CD4-positive, alpha-beta memory T cell (primary cell): ENCODE measurements at regions of chr10 and their contacts with region 1.

Region 1: DNA sequence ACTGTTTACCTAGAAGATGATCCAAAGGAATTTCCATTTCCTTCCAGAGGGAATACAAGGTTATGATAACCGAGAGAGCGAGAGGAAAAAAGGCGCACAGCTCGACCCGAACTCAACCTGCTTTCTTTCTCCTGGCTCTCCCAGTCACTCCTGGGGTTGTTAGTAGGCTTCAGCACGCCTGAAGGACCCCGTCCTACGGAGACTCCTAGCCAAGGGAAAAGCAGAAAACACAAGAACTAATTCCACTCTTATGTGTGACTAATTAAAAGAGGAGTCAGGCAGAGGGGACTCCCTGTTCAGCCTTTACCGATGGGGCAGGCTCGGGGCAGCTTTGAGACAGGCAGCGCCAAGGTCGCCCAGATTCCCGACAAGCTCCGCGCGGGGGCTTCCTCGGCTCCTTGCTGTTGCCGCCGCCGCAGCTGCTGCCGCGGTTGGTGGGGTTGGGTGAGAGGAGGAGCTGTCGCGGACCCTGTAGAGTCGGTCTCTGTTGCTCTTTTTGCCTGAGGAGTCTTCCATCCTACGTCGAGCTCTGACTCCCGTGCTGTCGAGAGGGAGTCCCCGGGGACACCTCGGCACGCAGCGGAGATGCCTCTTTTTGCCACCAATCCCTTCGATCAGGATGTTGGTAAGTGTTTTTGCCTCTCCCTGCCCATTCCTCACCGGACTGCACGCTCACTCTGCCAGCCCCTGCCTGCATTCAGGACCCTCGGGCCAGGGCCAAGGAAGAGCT is at the start of gene STAM:
- DNase-seq: peak; percentile 95 to 96 (median 96)
- H3K4me3 ChIP-seq: peak within 1 kb of the TSS; percentile 82 to 91
- H3K4me3 Mint-ChIP-seq: peak within 1 kb of the TSS; percentile 95 to 99 (median 98)
- H3K27ac ChIP-seq: peak within 1 kb of the TSS; percentile 93
- H3K27ac Mint-ChIP-seq: peak within 1 kb of the TSS; percentile 100
- H3K4me1 ChIP-seq: peaks cover 53% of the 10 kb centered on the region
- H3K4me1 Mint-ChIP-seq: peaks cover 40 to 69% (median 50%) of the 10 kb centered on the region in 4 donors
- H3K27me3 ChIP-seq: no peaks in the 10 kb centered on the region
- H3K27me3 Mint-ChIP-seq: no peaks in the 10 kb centered on the region
- total RNA-seq, gene STAM: 31.7 to 34.0 TPM

Region 2: GRCh38 chr10:17562614-17563013 is 81.3 kb before region 1 on chr10:
- CTCF ChIA-PET with region 1: no interaction called
- POLR2A ChIA-PET with region 1: no interaction called
- intact Hi-C with region 1: no loop called
- DNase-seq: no peak
- H3K4me3 ChIP-seq: no peak overlapping the region
- H3K4me3 Mint-ChIP-seq: no peak overlapping the region
- H3K27ac ChIP-seq: no peak overlapping the region
- H3K27ac Mint-ChIP-seq: no peak overlapping the region
- H3K4me1 ChIP-seq: no peaks in the 10 kb centered on the region
- H3K4me1 Mint-ChIP-seq: no peaks in the 10 kb centered on the region
- H3K27me3 ChIP-seq: no peaks in the 10 kb centered on the region
- H3K27me3 Mint-ChIP-seq: no peaks in the 10 kb centered on the region

Region 3: GRCh38 chr10:17617031-17617911 is 26.6 kb before region 1 on chr10 and contains the start of gene HACD1:
- CTCF ChIA-PET with region 1: interaction called, 5 read pairs
- POLR2A ChIA-PET with region 1: interaction called, 17 read pairs
- intact Hi-C with region 1: loop called (anchors 2 kb)
- DNase-seq: peak; percentile 20 to 54 (median 42)
- H3K4me3 ChIP-seq: peak within 1 kb of the TSS; percentile 47 to 71
- H3K4me3 Mint-ChIP-seq: peak within 1 kb of the TSS; percentile 89 to 92 (median 89)
- H3K27ac ChIP-seq: peak within 1 kb of the TSS; percentile 26
- H3K27ac Mint-ChIP-seq: peak within 1 kb of the TSS in 3 of 7 donors; percentile 22 to 86 (median 59)
- H3K4me1 ChIP-seq: peaks cover 8% of the 10 kb centered on the region
- H3K4me1 Mint-ChIP-seq: peaks cover 5 to 11% (median 6%) of the 10 kb centered on the region in 4 donors
- H3K27me3 ChIP-seq: no peaks in the 10 kb centered on the region
- H3K27me3 Mint-ChIP-seq: peaks cover 8 to 9% of the 10 kb centered on the region in 2 donors
- total RNA-seq, gene HACD1: 1.7 to 3.4 TPM

Region 4: DNA sequence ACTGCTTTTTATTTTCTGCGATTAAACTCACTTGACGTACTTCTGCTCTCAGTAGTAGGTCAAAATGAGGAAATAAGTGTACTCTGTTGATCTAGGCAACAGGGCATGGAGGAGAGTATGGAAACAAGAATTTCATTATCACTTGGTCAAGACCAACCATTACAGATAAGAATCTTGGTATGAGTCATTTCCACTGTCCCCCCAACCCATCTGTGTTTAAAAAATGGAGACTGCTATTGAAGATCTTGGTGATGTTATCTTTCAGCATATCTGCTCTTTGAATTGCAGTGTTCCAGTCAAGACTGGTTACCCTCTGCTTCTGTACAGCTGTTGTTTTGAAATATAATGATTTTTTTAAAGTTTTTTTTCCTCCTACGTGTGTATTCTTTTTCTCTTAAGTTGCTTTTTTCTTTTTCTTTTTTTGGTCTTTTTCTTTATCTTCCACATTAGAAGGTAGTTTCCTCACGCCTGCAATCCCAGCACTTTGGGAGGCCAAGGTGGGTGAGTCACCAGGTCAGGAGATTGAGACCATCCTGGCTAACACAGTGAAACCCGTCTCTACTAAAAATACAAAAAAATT is 11.7 kb after region 1 on chr10:
- CTCF ChIA-PET with region 1: interaction called, 10 read pairs
- POLR2A ChIA-PET with region 1: interaction called, 41 read pairs
- intact Hi-C with region 1: loop called (anchors 1 kb)
- DNase-seq: peak in 3 of 5 donors; percentile 23 to 41 (median 37)
- H3K4me3 ChIP-seq: no peak overlapping the region
- H3K4me3 Mint-ChIP-seq: peak overlapping the region; percentile 17 to 65 (median 47)
- H3K27ac ChIP-seq: peak overlapping the region; percentile 32
- H3K27ac Mint-ChIP-seq: peak overlapping the region in 6 of 7 donors; percentile 22 to 80 (median 68)
- H3K4me1 ChIP-seq: peaks cover 66% of the 10 kb centered on the region
- H3K4me1 Mint-ChIP-seq: peaks cover 47 to 75% (median 57%) of the 10 kb centered on the region in 4 donors
- H3K27me3 ChIP-seq: no peaks in the 10 kb centered on the region
- H3K27me3 Mint-ChIP-seq: no peaks in the 10 kb centered on the region

Region 5: DNA sequence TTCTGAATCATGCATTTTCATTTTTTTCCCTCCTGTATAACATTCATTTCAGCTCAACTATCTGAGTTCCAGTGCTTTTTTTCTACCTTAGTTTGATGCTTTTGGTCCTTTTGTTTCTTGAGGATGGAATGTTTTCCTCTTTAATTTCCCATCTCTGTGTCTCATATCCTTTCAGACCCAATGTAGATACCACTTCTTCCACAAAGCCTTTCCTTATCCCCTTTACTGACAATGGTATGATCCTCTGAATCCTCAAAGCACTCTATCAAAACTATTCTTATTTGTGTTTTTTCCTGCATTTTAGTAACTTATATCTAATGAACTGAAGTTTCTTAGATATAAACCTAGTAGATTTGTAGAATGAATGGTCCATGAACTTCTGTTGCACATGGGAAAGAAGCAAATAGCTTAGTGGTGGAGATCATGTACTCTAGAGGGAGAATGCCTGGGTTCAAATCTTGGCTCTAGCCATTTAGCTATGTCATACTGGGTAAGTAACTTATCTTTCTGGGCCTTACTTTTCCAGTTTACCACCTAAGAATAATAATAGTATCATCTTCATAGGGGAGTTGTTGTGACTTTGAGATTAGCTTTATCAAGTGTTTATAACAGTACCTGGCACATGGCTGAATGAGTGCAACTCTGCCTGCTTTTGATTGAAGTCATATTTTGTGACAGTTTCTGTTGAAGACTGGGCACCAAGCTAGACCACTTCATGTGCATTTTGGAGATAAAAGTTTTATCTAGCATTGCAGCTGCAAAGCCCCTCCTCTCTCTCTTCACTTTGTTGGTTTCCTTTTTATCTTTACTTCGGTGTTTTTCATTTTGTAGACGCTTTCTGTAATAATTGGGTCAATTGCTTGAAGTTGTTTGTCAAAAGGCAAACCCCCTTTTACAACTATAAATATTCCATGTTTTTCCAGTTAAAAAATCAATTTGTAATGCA is 18.5 kb after region 1 on chr10:
- CTCF ChIA-PET with region 1: interaction called, 7 read pairs
- POLR2A ChIA-PET with region 1: interaction called, 41 read pairs
- intact Hi-C with region 1: no loop called
- DNase-seq: no peak
- H3K4me3 ChIP-seq: no peak overlapping the region
- H3K4me3 Mint-ChIP-seq: peak overlapping the region in 5 of 8 donors; percentile 3 to 72 (median 61)
- H3K27ac ChIP-seq: peak overlapping the region; percentile 26
- H3K27ac Mint-ChIP-seq: peak overlapping the region in 6 of 7 donors; percentile 38 to 83 (median 55)
- H3K4me1 ChIP-seq: peaks cover 50% of the 10 kb centered on the region
- H3K4me1 Mint-ChIP-seq: peaks cover 39 to 50% (median 39%) of the 10 kb centered on the region in 4 donors
- H3K27me3 ChIP-seq: no peaks in the 10 kb centered on the region
- H3K27me3 Mint-ChIP-seq: no peaks in the 10 kb centered on the region

Region 6: DNA sequence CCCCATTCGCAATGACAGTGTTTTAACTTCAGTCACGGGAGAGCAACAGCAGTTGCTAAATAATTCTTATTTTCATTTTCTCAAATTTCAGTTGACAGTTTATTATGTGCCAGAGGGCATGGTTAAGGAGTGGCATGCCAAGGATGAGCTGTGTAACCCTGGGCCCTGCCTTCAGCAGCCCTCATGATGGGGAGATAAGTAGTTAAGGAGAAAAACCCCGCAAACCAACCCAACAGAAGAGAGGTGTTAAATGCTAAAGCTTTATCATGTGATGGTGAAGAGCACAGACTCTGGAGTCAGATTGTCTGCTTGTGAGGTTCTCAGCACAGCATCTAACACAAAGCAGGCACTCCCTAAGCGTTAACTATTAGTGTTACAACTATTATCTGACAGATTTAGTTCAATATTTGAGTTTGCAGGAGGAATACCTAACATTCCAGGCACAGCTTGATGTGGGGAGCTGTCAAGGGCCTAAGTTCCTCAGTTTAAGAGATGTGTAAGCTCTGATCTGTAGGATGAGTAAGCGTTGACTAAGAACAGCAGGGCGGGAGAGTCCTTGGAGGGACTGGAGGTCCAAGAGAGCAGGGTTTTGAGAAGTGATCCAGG is 29.6 kb after region 1 on chr10:
- CTCF ChIA-PET with region 1: interaction called, 8 read pairs
- POLR2A ChIA-PET with region 1: interaction called, 39 read pairs
- intact Hi-C with region 1: loop called (anchors 2 kb)
- DNase-seq: peak in 1 of 5 donors; percentile 40
- H3K4me3 ChIP-seq: no peak overlapping the region
- H3K4me3 Mint-ChIP-seq: peak overlapping the region in 4 of 8 donors; percentile 3 to 54 (median 31)
- H3K27ac ChIP-seq: peak overlapping the region; percentile 22
- H3K27ac Mint-ChIP-seq: peak overlapping the region; percentile 11 to 81 (median 44)
- H3K4me1 ChIP-seq: peaks cover 54% of the 10 kb centered on the region
- H3K4me1 Mint-ChIP-seq: peaks cover 41 to 76% (median 53%) of the 10 kb centered on the region in 4 donors
- H3K27me3 ChIP-seq: no peaks in the 10 kb centered on the region
- H3K27me3 Mint-ChIP-seq: no peaks in the 10 kb centered on the region

Region 7: DNA sequence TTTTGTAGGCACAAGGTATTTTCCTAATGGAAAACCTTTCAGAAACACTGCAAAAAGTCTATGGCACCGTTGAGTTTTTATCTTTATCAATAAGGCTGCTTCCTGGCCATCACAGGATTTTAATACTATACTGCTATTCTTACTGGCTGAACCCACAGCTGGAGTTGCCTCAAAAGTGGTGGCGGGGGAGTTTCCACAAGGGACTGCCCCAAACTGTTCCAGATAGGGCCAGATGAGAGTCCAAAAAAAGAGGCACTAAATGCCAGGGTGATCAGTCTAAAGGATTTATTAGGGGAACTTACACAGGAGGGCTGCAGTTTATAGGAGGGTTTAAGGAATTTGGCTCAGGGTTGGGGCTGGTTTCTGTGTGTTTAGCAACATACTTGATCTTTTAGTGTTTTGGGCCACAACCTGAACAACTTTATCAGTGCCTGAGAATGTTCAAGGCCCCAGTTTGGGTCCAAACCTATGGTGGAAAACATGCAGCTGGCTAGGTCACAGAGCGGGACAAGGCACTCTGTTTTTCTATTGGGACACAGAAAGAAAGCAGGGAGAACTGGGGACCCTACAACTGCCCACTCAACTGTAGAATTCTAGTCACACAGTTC is 41.4 kb after region 1 on chr10:
- CTCF ChIA-PET with region 1: interaction called, 3 read pairs
- POLR2A ChIA-PET with region 1: interaction called, 18 read pairs
- intact Hi-C with region 1: loop called (anchors 5 kb)
- DNase-seq: peak in 3 of 5 donors; percentile 3 to 66 (median 30)
- H3K4me3 ChIP-seq: no peak overlapping the region
- H3K4me3 Mint-ChIP-seq: peak overlapping the region in 4 of 8 donors; percentile 29 to 74 (median 58)
- H3K27ac ChIP-seq: peak overlapping the region; percentile 26
- H3K27ac Mint-ChIP-seq: peak overlapping the region in 5 of 7 donors; percentile 25 to 91 (median 43)
- H3K4me1 ChIP-seq: peaks cover 52% of the 10 kb centered on the region
- H3K4me1 Mint-ChIP-seq: peaks cover 26 to 54% (median 38%) of the 10 kb centered on the region in 4 donors
- H3K27me3 ChIP-seq: no peaks in the 10 kb centered on the region
- H3K27me3 Mint-ChIP-seq: no peaks in the 10 kb centered on the region

Region 8: DNA sequence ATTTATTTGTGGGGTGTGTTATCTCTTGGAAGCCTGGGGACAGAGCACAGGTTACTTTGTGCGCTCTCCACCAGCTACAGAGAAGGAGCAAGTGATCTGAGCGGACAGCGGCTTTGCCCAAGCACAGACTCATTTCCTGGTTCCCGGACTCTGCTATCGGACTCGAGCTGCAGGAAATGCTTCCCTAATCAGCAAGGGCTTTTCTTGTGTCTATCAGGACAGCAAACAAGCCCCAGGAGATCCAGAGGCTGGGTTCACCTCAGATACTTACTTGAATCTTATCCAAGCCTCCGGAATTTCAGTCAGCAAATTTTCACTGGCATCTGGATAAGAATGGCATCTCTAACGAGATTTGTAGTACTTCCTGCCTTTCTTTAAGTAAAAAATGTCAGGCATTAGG is 193.0 kb after region 1 on chr10:
- CTCF ChIA-PET with region 1: no interaction called
- POLR2A ChIA-PET with region 1: no interaction called
- intact Hi-C with region 1: no loop called
- DNase-seq: no peak
- H3K4me3 ChIP-seq: no peak overlapping the region
- H3K4me3 Mint-ChIP-seq: no peak overlapping the region
- H3K27ac ChIP-seq: no peak overlapping the region
- H3K27ac Mint-ChIP-seq: no peak overlapping the region
- H3K4me1 ChIP-seq: no peaks in the 10 kb centered on the region
- H3K4me1 Mint-ChIP-seq: peaks cover 0 to 2% (median 0%) of the 10 kb centered on the region in 4 donors
- H3K27me3 ChIP-seq: no peaks in the 10 kb centered on the region
- H3K27me3 Mint-ChIP-seq: peaks cover 9 to 11% of the 10 kb centered on the region in 2 donors

Region 9: DNA sequence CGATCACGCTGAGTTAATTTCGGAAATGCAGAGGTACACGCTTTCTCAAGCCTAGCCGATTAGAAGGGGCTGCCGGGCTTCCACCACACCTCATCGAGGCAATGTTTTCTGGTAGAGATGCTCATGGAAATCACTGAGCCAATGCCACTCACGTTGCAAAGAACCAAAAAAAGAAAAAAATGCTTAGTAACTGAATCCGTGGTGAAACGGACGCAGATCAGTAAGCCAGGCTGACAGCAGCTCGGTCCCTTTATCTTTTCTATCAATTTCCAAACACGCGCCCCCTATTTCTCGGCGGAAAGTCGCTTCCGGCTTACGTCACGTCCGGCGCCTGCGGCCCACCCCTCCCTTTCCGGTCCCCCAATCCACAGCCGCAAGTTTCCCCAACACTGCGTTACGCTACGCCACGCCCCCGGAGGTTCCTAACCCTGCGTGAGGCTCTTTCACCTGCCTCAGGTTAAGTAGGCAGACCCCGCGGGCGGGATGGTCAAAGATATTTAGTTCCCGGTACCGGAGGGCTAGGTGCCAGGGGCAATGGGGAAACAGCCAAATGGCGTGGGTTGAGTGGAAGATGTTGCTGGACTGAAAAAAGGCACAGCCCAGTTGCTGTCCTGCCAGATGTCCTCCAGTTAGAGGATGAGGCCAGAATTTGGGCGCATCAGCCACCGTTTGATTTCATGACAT is 1007.5 kb after region 1 on chr10 and contains the start of gene NSUN6:
- CTCF ChIA-PET with region 1: no interaction called
- POLR2A ChIA-PET with region 1: no interaction called
- intact Hi-C with region 1: loop called (anchors 5 kb)
- DNase-seq: peak; percentile 94 to 95 (median 95)
- H3K4me3 ChIP-seq: peak within 1 kb of the TSS; percentile 77 to 88
- H3K4me3 Mint-ChIP-seq: peak within 1 kb of the TSS; percentile 93 to 99 (median 98)
- H3K27ac ChIP-seq: peak within 1 kb of the TSS; percentile 89
- H3K27ac Mint-ChIP-seq: peak within 1 kb of the TSS; percentile 96 to 100 (median 98)
- H3K4me1 ChIP-seq: peaks cover 39% of the 10 kb centered on the region
- H3K4me1 Mint-ChIP-seq: peaks cover 27 to 62% (median 36%) of the 10 kb centered on the region in 4 donors
- H3K27me3 ChIP-seq: no peaks in the 10 kb centered on the region
- H3K27me3 Mint-ChIP-seq: peaks cover 0 to 2% of the 10 kb centered on the region in 2 donors
- total RNA-seq, gene NSUN6: 41.6 to 43.4 TPM